ENCODE measurements at regions of chr15 and their contacts with region 1.

Region 1: GRCh38 chr15:60649845-60650548 is 171.1 kb upstream of the ICE2 start:
- DNase-seq: peak; percentile 68
- H3K4me3 Mint-ChIP-seq: peak overlapping the region; percentile 54
- H3K27ac Mint-ChIP-seq: peak overlapping the region; percentile 87
- H3K4me1 Mint-ChIP-seq: peaks cover 58% of the 10 kb centered on the region
- H3K27me3 Mint-ChIP-seq: no peaks in the 10 kb centered on the region

Region 2: GRCh38 chr15:60573936-60574335 is 76.1 kb before region 1 on chr15:
- CTCF ChIA-PET with region 1: no interaction called
- POLR2A ChIA-PET with region 1: no interaction called
- intact Hi-C with region 1: no loop called
- DNase-seq: peak; percentile 68
- H3K4me3 Mint-ChIP-seq: peak overlapping the region; percentile 64
- H3K27ac Mint-ChIP-seq: peak overlapping the region; percentile 85
- H3K4me1 Mint-ChIP-seq: peaks cover 88% of the 10 kb centered on the region
- H3K27me3 Mint-ChIP-seq: no peaks in the 10 kb centered on the region

Region 3: GRCh38 chr15:60635507-60636352 is 14.3 kb before region 1 on chr15:
- CTCF ChIA-PET with region 1: no interaction called
- POLR2A ChIA-PET with region 1: no interaction called
- intact Hi-C with region 1: no loop called
- DNase-seq: no peak
- H3K4me3 Mint-ChIP-seq: no peak overlapping the region
- H3K27ac Mint-ChIP-seq: no peak overlapping the region
- H3K4me1 Mint-ChIP-seq: peaks cover 12% of the 10 kb centered on the region
- H3K27me3 Mint-ChIP-seq: no peaks in the 10 kb centered on the region

Region 4: DNA sequence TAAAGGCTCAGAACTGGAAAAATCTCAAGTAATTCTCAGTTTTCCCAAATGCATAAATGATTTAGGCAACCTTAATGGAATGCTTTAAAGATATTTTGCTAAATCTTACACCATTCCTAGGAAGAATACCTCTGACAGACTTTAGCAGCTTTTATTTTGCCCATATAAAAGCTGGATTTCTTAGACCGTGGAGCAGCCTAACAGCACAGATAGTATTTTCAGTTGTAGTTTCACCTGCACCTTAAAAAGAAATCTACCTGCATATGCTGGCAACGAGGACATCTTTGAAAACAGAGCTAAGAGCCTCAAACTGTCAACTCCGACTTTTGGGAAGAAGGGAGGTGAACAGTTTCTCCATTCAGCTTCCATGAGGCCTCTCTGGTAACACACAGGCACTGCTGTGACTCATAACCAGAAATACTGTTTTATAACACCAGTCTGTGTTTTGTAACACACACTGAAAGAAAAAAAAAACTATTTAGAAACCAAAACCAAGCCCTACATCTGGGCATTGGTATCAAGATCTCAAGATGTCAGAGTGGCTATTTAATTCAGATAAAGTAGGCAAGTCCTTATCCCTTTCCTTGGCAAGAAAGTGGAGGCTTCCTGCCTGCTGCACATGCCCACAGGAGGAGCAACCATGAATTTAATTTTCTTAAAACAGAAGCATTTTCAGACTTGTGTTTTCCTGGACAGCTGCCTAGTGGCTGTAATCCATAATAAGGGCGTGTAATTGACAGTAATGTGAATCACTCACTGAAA is 10.5 kb after region 1 on chr15:
- CTCF ChIA-PET with region 1: interaction called, 11 read pairs
- POLR2A ChIA-PET with region 1: interaction called, 3 read pairs
- intact Hi-C with region 1: loop called (anchors 1 kb)
- DNase-seq: no peak
- H3K4me3 Mint-ChIP-seq: peak overlapping the region; percentile 29
- H3K27ac Mint-ChIP-seq: no peak overlapping the region
- H3K4me1 Mint-ChIP-seq: peaks cover 36% of the 10 kb centered on the region
- H3K27me3 Mint-ChIP-seq: no peaks in the 10 kb centered on the region

Region 5: GRCh38 chr15:60854858-60855564 is 205.0 kb after region 1 on chr15:
- CTCF ChIA-PET with region 1: interaction called, 3 read pairs
- POLR2A ChIA-PET with region 1: no interaction called
- intact Hi-C with region 1: loop called (anchors 1 kb)
- DNase-seq: peak; percentile 39
- H3K4me3 Mint-ChIP-seq: no peak overlapping the region
- H3K27ac Mint-ChIP-seq: peak overlapping the region; percentile 1
- H3K4me1 Mint-ChIP-seq: peaks cover 45% of the 10 kb centered on the region
- H3K27me3 Mint-ChIP-seq: no peaks in the 10 kb centered on the region

Measured in activated CD4-positive, alpha-beta memory T cell treated with anti-CD3 and anti-CD28 coated beads for 36 hours (primary cell).